A673 (cell line): ENCODE measurements at regions of chr4 and their contacts with region 1.

Region 1: DNA sequence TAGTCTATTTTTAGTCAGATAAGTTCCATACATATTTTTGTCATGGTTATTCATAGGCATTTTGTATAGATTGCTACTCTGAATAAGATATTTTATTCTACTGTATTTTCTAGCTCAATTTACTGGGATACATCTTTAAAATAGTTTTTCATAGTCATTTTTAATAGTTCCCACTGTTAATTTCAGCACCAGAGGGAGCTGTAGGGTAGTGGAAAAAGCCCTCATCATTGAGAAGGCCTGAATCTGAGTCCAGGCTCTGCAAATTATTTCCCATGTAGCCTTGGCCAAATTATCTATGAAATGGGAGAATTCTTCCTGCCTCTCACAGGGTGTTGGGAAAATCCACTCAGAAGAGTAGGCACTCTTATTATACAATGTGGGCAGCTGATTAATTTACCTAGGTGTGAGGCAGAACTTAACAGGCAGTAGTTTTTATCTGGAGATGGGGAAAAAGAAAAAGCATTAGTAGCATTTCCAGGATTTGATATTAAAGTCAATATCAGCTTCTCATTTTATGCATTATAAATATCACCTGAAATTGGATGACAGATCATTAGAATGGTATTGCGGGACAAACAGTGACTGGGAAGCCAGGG is 102.9 kb upstream of the PAQR3 start:
- DNase-seq: peak; percentile 14
- H3K4me3 ChIP-seq: no peak overlapping the region
- H3K27ac ChIP-seq: no peak overlapping the region
- H3K4me1 ChIP-seq: no peaks in the 10 kb centered on the region
- H3K27me3 ChIP-seq: no peaks in the 10 kb centered on the region
- CTCF ChIP-seq: peak; percentile 54

Region 2: GRCh38 chr4:77994194-77994721 is 1047.9 kb before region 1 on chr4:
- CTCF ChIA-PET with region 1: no interaction called
- POLR2A ChIA-PET with region 1: no interaction called
- intact Hi-C with region 1: no loop called
- DNase-seq: peak; percentile 53
- H3K4me3 ChIP-seq: no peak overlapping the region
- H3K27ac ChIP-seq: no peak overlapping the region
- H3K4me1 ChIP-seq: no peaks in the 10 kb centered on the region
- H3K27me3 ChIP-seq: no peaks in the 10 kb centered on the region
- CTCF ChIP-seq: peak; percentile 54

Region 3: DNA sequence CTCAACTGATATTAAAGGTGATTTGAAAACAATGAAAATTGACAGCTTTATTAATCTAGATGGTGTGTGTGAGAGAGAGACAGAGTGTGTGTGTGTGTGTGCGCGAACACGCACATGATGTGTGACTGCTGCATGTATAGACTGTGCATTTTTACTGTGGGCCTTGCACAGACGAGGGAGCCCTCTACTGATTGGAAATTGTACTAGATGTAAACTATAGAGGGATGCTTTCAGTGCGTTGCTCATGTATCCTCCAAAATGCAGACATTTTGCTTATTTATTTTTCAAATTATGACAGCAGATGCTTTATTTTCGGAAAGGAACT is 534.2 kb after region 1 on chr4:
- CTCF ChIA-PET with region 1: no interaction called
- POLR2A ChIA-PET with region 1: no interaction called
- intact Hi-C with region 1: loop called (anchors 10 kb)
- DNase-seq: peak; percentile 28
- H3K4me3 ChIP-seq: no peak overlapping the region
- H3K27ac ChIP-seq: no peak overlapping the region
- H3K4me1 ChIP-seq: no peaks in the 10 kb centered on the region
- H3K27me3 ChIP-seq: no peaks in the 10 kb centered on the region
- CTCF ChIP-seq: peak; percentile 53

Region 4: GRCh38 chr4:80215449-80216052 is 1173.4 kb after region 1 on chr4:
- CTCF ChIA-PET with region 1: no interaction called
- POLR2A ChIA-PET with region 1: no interaction called
- intact Hi-C with region 1: loop called (anchors 5 kb)
- DNase-seq: peak; percentile 23
- H3K4me3 ChIP-seq: no peak overlapping the region
- H3K27ac ChIP-seq: no peak overlapping the region
- H3K4me1 ChIP-seq: no peaks in the 10 kb centered on the region
- H3K27me3 ChIP-seq: peaks cover 20% of the 10 kb centered on the region
- CTCF ChIP-seq: peak; percentile 53